ENCODE measurements at regions of chr16 and their contacts with region 1.

Region 1: DNA sequence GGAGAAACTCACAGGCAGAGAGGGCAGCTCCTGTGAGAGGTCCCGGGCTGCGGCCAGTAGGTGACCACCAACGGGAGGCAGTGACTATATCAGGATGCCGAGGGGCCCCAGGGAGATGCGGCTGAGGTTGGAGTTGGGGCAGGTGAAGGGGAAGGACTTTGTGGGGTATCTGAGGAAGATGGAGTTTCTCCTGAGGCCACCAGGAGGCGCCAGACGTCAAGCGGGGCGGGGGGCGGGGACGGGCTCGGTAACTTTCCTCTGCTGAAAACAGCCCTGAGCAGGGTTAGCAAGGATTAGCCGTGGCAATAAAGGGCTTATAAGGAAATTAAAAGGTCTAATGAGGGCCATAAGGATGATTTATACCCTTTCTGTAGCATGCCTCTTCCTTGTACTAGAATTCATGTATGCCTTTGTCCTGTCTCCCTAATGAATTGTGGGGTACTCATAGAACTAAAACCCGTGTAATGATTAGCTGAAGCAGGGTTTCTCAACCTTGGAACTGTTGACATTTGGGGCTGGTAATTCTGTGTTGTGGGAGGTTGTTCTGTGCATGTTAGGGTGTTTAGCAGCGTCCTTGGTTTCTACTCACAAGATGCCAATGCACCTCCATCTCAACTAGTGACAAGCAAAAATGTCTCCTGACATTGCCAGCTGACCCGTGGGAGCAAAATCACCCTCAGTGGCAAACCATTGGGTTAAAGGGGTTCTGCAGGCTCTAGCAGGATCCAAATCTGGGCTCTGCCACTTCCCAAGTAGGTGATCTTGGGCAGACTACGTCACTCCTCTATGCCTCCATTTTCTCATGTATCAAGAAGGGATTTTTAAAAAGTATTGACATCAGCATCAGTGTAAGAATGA is 74.8 kb upstream of the GRIN2A start:
- DNase-seq: peak; percentile 52
- H3K4me3 Mint-ChIP-seq: peak overlapping the region; percentile 13
- H3K27ac Mint-ChIP-seq: no peak overlapping the region
- H3K4me1 Mint-ChIP-seq: peaks cover 18% of the 10 kb centered on the region
- H3K27me3 Mint-ChIP-seq: peaks cover 9% of the 10 kb centered on the region
- CTCF ChIP-seq: peak; percentile 82

Region 2: DNA sequence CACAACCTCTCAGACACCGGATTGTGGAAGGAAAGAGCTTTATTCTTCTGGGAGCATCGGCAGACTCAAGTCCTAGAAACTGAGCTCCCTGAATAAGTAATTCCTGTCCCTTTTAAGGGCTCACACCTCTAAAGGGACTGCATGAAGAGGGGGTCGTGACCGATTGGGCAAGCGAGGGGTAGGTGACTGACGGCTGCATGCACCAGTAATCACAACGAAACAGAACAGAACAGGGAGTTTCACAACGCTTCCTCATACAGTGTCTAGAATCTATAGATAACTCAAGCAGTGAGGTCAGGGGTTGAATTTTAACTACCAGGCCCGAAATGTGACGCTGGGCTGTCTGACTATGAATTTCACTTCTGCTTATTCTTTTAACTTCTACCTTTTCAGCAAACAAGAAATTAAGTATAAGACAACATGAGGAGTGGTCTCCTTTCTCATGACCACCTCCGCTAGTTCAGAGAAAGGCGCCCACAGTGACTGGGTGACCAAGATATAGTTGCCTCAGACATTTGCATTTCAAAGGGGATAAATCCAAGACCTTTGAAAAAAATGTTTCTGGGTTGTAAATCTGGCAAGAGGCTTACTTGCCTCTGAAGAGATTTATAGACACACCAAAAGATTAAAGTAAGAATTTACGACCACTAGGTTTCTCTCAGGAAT is 40.5 kb after region 1 on chr16:
- CTCF ChIA-PET with region 1: no interaction called
- intact Hi-C with region 1: loop called (anchors 5 kb)
- DNase-seq: no peak
- H3K4me3 Mint-ChIP-seq: no peak overlapping the region
- H3K27ac Mint-ChIP-seq: no peak overlapping the region
- H3K4me1 Mint-ChIP-seq: no peaks in the 10 kb centered on the region
- H3K27me3 Mint-ChIP-seq: no peaks in the 10 kb centered on the region
- CTCF ChIP-seq: no peak

Region 3: DNA sequence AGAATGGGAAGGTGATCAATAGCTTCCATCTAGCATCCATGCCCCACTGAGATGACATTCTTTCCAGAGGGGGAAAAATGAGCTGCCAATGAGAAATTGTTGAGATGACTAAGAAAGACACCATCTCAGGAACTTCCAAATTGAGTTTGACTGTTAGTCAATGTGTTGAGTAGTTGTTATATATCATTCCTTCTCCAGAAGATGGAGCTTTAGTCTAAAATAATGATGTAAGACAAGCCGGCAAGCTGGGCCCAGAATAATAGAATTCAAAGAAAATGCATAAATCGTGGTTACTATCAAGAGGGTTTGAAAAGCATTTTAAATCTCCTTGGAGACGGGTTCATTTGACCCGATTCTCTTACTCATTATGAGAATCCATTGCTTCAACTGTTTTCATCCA is 57.8 kb after region 1 on chr16:
- CTCF ChIA-PET with region 1: interaction called, 4 read pairs
- intact Hi-C with region 1: loop called (anchors 2 kb)
- DNase-seq: no peak
- H3K4me3 Mint-ChIP-seq: no peak overlapping the region
- H3K27ac Mint-ChIP-seq: no peak overlapping the region
- H3K4me1 Mint-ChIP-seq: peaks cover 23% of the 10 kb centered on the region
- H3K27me3 Mint-ChIP-seq: no peaks in the 10 kb centered on the region
- CTCF ChIP-seq: no peak

Region 4: DNA sequence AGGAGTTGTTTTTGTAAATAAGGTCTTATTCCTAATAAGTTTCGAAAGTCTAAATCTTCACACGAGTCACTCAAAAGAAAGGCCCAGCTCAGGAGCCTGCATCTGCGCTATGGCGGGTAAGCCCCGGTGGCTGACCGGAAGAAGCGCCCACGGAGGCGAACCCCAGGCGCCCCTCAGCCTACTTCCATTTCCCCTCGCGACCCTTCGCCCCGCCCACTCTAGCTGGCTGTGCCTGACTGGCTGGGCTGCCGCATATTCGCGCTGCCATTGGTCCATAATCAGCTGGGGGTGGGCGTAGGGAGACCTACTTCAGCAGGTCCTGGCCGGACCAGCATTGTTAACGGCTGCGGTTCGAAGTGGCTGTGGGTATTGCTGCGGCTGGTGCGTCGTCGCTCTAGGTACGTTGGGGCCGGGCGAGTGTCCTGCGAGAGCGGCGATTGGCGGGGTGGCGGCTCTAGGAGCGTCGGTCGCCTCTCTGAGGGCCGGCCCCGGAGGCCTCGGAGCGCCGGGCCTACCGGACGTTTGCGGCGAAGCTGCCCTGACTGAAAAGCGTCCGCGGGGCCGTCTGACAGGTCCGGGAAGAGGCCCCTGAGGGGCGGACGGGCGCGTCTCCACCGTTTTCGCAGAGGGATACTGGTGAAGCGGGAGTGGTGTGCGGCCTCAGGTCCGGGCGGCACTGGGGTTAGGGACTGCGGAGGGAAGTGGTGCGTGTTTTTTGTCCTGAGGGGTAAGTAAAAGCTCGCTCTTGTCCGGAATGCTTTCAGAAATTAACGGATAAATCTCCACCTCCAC is 128.9 kb after region 1 on chr16 and contains the start of gene ATF7IP2:
- CTCF ChIA-PET with region 1: no interaction called
- intact Hi-C with region 1: loop called (anchors 2 kb)
- DNase-seq: peak; percentile 97
- H3K4me3 Mint-ChIP-seq: peak within 1 kb of the TSS; percentile 97
- H3K27ac Mint-ChIP-seq: peak within 1 kb of the TSS; percentile 91
- H3K4me1 Mint-ChIP-seq: peaks cover 10% of the 10 kb centered on the region
- H3K27me3 Mint-ChIP-seq: no peaks in the 10 kb centered on the region
- CTCF ChIP-seq: no peak
- total RNA-seq, gene ATF7IP2: 23.9 and 29.7 TPM in 2 replicates

Measured in Calu3 (cell line).